ENCODE measurements at regions of chr3 and their contacts with region 1.

Region 1: GRCh38 chr3:141875374-141875892 is 1.0 kb upstream of the ATP1B3 start:
- DNase-seq: peak; percentile 92
- ATAC-seq: peak; percentile 73
- H3K4me3 Mint-ChIP-seq: peak overlapping the region; percentile 93
- H3K27ac Mint-ChIP-seq: peak overlapping the region; percentile 91
- H3K4me1 Mint-ChIP-seq: peaks cover 23% of the 10 kb centered on the region
- H3K27me3 Mint-ChIP-seq: no peaks in the 10 kb centered on the region

Region 2: DNA sequence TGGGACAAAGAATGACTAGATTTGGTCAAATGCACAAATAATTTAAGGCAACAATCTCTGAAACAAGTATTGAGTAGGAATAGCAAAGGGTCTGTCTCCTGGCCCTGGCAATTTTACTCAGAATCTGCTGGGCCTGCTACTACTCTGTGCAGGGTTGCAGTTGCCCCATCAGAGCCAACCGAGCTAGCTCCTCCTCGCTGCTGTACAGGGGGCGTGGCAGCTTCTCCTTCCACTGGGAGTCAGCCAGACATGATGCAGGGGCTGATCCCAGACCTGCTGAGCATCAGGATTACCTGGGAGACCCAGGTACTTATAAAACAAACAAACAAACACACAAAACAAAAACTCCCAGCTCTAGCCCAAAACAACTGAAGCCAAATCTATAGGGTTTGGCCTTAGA is 674.3 kb before region 1 on chr3:
- CTCF ChIA-PET with region 1: no interaction called
- POLR2A ChIA-PET with region 1: no interaction called
- intact Hi-C with region 1: no loop called
- DNase-seq: no peak
- ATAC-seq: no peak
- H3K4me3 Mint-ChIP-seq: no peak overlapping the region
- H3K27ac Mint-ChIP-seq: no peak overlapping the region
- H3K4me1 Mint-ChIP-seq: no peaks in the 10 kb centered on the region
- H3K27me3 Mint-ChIP-seq: no peaks in the 10 kb centered on the region

Region 3: GRCh38 chr3:141412087-141412935 is 463.1 kb before region 1 on chr3:
- CTCF ChIA-PET with region 1: no interaction called
- POLR2A ChIA-PET with region 1: no interaction called
- intact Hi-C with region 1: loop called in 1 of 2 experiments (anchors 5 kb)
- DNase-seq: peak; percentile 71
- ATAC-seq: peak; percentile 24
- H3K4me3 Mint-ChIP-seq: peak overlapping the region; percentile 74
- H3K27ac Mint-ChIP-seq: peak overlapping the region; percentile 99
- H3K4me1 Mint-ChIP-seq: peaks cover 89% of the 10 kb centered on the region
- H3K27me3 Mint-ChIP-seq: no peaks in the 10 kb centered on the region

Region 4: GRCh38 chr3:141796081-141796888 is 79.1 kb before region 1 on chr3:
- CTCF ChIA-PET with region 1: interaction called, 21 read pairs
- POLR2A ChIA-PET with region 1: interaction called, 9 read pairs
- intact Hi-C with region 1: loop called (anchors 1 to 2 kb)
- DNase-seq: peak; percentile 90
- ATAC-seq: peak; percentile 84
- H3K4me3 Mint-ChIP-seq: peak overlapping the region; percentile 77
- H3K27ac Mint-ChIP-seq: peak overlapping the region; percentile 97
- H3K4me1 Mint-ChIP-seq: peaks cover 52% of the 10 kb centered on the region
- H3K27me3 Mint-ChIP-seq: no peaks in the 10 kb centered on the region

Region 5: DNA sequence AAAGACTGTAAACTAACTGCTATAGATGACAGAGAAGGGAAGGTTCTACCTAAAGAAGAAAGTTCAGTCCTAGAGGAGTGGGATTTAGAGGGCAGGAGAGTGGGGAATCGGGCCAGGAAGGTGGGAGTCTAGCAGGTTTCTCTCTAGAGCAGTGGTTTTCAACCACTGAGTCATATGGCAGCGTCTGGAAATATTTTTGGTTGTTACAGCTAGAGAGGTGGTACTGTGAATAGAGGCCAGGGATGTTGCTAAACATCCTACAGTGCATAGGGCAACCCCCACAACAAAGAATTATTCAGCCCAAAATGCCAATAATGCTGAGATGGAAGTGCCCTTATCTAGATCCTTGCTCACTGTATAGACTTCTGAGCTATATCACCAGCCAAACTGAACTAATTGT is 29.7 kb after region 1 on chr3:
- CTCF ChIA-PET with region 1: interaction called, 5 read pairs
- POLR2A ChIA-PET with region 1: interaction called, 4 read pairs
- intact Hi-C with region 1: loop called in 1 of 2 experiments (anchors 2 kb)
- DNase-seq: no peak
- ATAC-seq: peak; percentile 37
- H3K4me3 Mint-ChIP-seq: no peak overlapping the region
- H3K27ac Mint-ChIP-seq: peak overlapping the region; percentile 8
- H3K4me1 Mint-ChIP-seq: peaks cover 29% of the 10 kb centered on the region
- H3K27me3 Mint-ChIP-seq: no peaks in the 10 kb centered on the region

Region 6: DNA sequence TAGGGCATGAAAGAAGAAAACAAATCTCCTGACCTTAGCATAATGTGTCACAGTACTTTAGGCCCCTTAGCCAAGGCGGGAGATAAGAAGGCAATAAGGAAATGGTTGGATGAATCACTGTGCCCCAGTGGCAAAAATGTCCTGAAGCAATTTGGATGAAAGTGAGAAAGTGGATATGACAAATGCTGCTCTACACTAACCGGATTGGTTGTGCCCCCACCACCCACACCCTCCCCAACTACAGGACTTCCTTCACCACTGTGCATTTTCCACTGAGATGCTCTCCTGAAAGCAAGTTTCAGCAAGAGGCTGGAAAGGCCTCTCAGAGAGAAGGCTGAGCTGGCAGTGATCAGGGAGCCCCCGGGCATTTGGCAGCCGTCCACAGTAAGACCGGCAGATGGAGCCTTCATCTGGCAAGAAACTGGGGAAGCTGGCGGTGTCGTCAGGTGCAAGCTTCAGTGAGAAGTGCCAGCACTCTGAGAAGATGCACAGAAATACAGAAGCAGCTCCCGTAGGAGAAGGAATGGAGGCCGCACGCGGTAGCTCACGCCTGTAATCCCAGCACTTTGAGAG is 64.9 kb after region 1 on chr3:
- CTCF ChIA-PET with region 1: no interaction called
- POLR2A ChIA-PET with region 1: interaction called, 3 read pairs
- intact Hi-C with region 1: loop called in 1 of 2 experiments (anchors 1 kb)
- DNase-seq: peak; percentile 76
- ATAC-seq: peak; percentile 90
- H3K4me3 Mint-ChIP-seq: no peak overlapping the region
- H3K27ac Mint-ChIP-seq: peak overlapping the region; percentile 78
- H3K4me1 Mint-ChIP-seq: peaks cover 19% of the 10 kb centered on the region
- H3K27me3 Mint-ChIP-seq: no peaks in the 10 kb centered on the region

Region 7: GRCh38 chr3:142226484-142226883 is 351.1 kb after region 1 on chr3:
- CTCF ChIA-PET with region 1: no interaction called
- POLR2A ChIA-PET with region 1: no interaction called
- intact Hi-C with region 1: loop called in 1 of 2 experiments (anchors 1 kb)
- DNase-seq: no peak
- ATAC-seq: no peak
- H3K4me3 Mint-ChIP-seq: peak overlapping the region; percentile 82
- H3K27ac Mint-ChIP-seq: no peak overlapping the region
- H3K4me1 Mint-ChIP-seq: peaks cover 13% of the 10 kb centered on the region
- H3K27me3 Mint-ChIP-seq: no peaks in the 10 kb centered on the region

Measured in activated CD4-positive, alpha-beta T cell treated with anti-CD3 and anti-CD28 coated beads for 36 hours (primary cell).